Esophagus muscularis mucosa (tissue), 4 donors: ENCODE measurements at regions of chr12 and their contacts with region 1.

Region 1: GRCh38 chr12:1795785-1796514 is 24.4 kb upstream of the LRTM2 start:
- DNase-seq: peak; percentile 97
- H3K4me3 ChIP-seq: peak overlapping the region; percentile 56 to 73 (median 66)
- H3K27ac ChIP-seq: peak overlapping the region; percentile 77 to 87 (median 86)
- H3K4me1 ChIP-seq: peaks cover 37 to 51% (median 46%) of the 10 kb centered on the region in 4 donors
- H3K27me3 ChIP-seq: no peaks in the 10 kb centered on the region
- CTCF ChIP-seq: peak; percentile 98 to 100 (median 99)
- EP300 ChIP-seq: no peak
- POLR2A ChIP-seq: no peak

Region 2: DNA sequence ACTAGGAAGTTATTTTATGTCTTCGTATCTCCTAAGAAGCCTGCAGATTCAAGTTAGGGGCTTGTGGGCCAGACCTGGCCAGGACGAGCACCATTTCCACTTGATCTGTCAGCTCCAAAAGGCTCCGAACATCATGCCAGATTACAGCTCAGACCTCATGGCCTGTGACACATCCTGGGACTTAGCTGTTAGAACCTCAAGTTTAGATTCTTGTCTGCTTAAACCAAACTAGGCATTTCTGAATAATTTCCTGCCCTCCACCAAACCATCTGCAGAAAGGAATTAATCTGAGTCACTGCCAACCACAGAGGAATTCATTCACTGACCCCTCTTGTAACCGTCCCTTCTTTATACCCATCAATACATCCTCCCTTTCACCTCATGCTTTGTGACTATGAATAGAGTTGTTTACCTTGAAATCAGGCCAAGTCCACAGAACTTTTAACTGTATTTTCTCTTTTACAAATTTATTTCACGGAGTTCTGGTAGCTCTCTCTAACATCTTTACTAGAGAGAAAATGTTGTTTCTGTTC is 321.8 kb before region 1 on chr12:
- intact Hi-C with region 1: no loop called
- DNase-seq: no peak
- H3K4me3 ChIP-seq: peak overlapping the region in 3 of 4 donors; percentile 1 to 20 (median 6)
- H3K27ac ChIP-seq: peak overlapping the region; percentile 45 to 64 (median 59)
- H3K4me1 ChIP-seq: peaks cover 30 to 75% (median 55%) of the 10 kb centered on the region in 4 donors
- H3K27me3 ChIP-seq: no peaks in the 10 kb centered on the region
- CTCF ChIP-seq: no peak
- EP300 ChIP-seq: no peak
- POLR2A ChIP-seq: no peak

Region 3: DNA sequence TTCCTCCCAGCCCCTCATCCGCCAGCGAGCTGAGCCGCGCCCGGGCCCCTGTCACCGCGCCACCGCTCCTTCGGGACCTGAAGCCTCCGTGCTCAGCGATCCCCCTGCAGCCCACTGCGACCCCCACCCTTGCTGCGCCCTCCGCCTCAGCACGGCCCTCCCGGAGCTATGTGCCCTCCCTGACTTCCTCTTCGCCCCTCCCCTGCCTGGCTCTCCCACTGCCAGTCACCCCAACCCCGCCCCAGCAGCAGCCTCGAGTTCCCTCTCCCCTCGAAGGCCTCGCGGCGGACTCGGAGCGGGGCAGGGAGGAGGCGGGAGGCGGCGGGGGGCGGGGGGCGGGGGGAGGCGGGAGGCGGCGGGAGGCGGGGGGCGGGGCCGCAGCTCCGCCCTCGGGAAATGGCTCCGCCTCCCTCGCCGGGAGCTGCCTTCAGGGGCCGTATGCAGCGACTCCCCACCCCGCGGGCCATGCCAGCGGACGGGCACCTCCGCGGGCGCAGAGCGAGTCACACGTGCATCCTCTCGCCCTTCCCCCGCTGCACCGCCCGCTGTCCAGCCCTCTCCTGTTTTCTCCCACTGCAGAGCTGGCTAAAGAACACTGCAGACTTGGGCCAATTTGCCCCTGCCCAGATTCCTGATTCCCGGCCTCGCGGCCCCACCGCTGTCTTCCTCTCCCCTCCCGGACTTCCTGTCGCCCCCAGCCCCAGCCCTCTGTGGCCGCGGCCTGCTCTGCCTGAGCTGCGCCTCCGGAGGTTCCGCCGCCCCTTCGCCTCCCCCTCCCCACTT is 134.2 kb before region 1 on chr12:
- intact Hi-C with region 1: no loop called
- DNase-seq: peak; percentile 98
- H3K4me3 ChIP-seq: peak overlapping the region; percentile 54 to 63 (median 60)
- H3K27ac ChIP-seq: peak overlapping the region; percentile 90 to 96 (median 95)
- H3K4me1 ChIP-seq: peaks cover 40 to 57% (median 54%) of the 10 kb centered on the region in 4 donors
- H3K27me3 ChIP-seq: no peaks in the 10 kb centered on the region
- CTCF ChIP-seq: no peak
- EP300 ChIP-seq: no peak
- POLR2A ChIP-seq: no peak

Region 4: GRCh38 chr12:1939801-1940607 is 144.1 kb after region 1 on chr12:
- intact Hi-C with region 1: loop called (anchors 1 kb)
- DNase-seq: peak; percentile 98
- H3K4me3 ChIP-seq: peak overlapping the region; percentile 5 to 32 (median 18)
- H3K27ac ChIP-seq: peak overlapping the region; percentile 59 to 78 (median 71)
- H3K4me1 ChIP-seq: peaks cover 15 to 56% (median 43%) of the 10 kb centered on the region in 4 donors
- H3K27me3 ChIP-seq: no peaks in the 10 kb centered on the region
- CTCF ChIP-seq: peak; percentile 95 to 99 (median 99)
- EP300 ChIP-seq: no peak
- POLR2A ChIP-seq: no peak